CD8-positive, alpha-beta memory T cell (primary cell): ENCODE measurements at regions of chr1 and their contacts with region 1.

Region 1: DNA sequence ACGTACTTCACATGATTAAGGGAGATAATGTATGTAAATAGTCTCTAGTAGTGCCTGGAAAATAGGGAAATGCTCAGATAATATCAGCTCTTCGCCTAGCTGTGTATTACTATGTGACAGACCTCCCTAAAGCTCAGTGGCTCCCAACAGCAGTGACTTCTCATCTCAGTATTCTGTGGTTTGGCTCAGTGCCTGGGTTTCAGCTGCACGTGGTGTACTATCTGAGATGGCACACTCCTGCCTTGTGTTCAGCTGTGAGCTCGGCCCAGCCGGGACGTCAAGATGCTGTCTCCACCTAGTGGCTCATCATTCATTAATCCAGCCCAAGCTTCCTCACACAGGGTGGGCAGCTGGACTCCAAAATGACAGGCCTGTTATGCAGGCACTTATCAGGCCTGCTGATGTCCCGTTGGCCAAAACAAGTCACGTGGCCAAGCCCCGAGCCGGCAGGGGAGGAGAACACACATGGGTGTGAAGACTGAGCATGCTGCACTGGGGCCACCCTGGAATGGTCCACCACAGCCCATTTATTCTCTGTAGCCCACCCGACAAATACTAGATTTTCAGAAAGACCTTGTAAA is 17.8 kb downstream of the SLFNL1 start:
- DNase-seq: peak; percentile 69 to 93 (median 81)
- H3K4me3 ChIP-seq: no peak overlapping the region
- H3K4me3 Mint-ChIP-seq: peak overlapping the region in 1 of 7 donors; percentile 1
- H3K27ac ChIP-seq: no peak overlapping the region
- H3K27ac Mint-ChIP-seq: peak overlapping the region; percentile 2 to 94 (median 55)
- H3K4me1 ChIP-seq: peaks cover 17% of the 10 kb centered on the region
- H3K4me1 Mint-ChIP-seq: peaks cover 13 to 26% (median 18%) of the 10 kb centered on the region in 3 donors
- H3K27me3 ChIP-seq: no peaks in the 10 kb centered on the region
- H3K27me3 Mint-ChIP-seq: no peaks in the 10 kb centered on the region

Region 2: GRCh38 chr1:40476924-40477677 is 526.6 kb before region 1 on chr1 and contains the start of gene ZFP69:
- CTCF ChIA-PET with region 1: no interaction called
- POLR2A ChIA-PET with region 1: no interaction called
- DNase-seq: peak; percentile 55 to 76 (median 72)
- H3K4me3 ChIP-seq: peak within 1 kb of the TSS; percentile 77
- H3K4me3 Mint-ChIP-seq: peak within 1 kb of the TSS; percentile 85 to 96 (median 93)
- H3K27ac ChIP-seq: peak within 1 kb of the TSS; percentile 56
- H3K27ac Mint-ChIP-seq: peak within 1 kb of the TSS; percentile 60 to 88 (median 73)
- H3K4me1 ChIP-seq: peaks cover 10% of the 10 kb centered on the region
- H3K4me1 Mint-ChIP-seq: peaks cover 24 to 34% (median 28%) of the 10 kb centered on the region in 3 donors
- H3K27me3 ChIP-seq: no peaks in the 10 kb centered on the region
- H3K27me3 Mint-ChIP-seq: peaks cover 0 to 1% of the 10 kb centered on the region in 2 donors
- total RNA-seq, gene ZFP69: 2.8 to 2.9 TPM

Region 3: DNA sequence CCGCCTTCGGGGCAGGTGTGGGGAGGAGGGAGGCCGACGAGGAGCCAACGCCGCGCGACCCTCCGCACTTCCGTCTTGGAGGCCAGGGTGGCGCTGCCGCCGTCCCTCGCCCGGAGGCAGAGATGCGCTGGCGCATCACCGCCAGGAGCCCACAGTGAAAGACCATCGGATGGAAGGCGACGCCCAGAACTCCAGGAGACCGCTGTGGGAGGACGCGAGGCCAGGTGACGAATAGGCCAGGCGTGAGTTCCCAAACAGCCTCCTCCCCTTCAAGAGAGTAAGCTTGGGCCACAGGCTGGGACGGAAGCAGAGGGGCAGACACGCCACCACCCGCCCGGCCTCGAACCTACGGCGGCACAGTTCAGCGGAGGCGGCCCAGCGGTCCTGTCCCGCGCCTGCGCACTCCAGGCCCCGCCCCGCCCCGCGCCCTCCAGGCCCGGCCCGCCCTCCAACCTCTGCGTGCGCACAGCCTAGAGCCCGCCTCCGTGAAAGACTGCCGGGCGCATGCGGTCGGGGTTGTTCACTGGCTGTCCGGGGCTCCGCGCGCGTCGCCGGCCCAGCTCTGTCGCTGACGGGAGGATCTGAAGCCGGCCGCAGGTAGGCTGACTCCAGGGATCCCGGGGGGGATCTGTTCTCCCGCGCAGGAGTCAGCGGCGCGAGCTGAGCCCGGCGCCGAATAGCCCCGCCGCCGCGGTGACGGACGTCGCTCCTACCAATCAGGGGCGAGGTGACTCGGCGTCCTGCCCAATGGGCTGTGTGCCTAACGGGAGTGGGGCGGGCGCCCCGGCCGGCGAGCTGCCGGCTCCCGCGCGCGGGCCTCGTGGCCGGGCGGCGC is 24.3 kb before region 1 on chr1 and contains the start of gene CTPS1:
- CTCF ChIA-PET with region 1: interaction called, 41 read pairs
- POLR2A ChIA-PET with region 1: interaction called, 17 read pairs
- DNase-seq: peak; percentile 92 to 96 (median 94)
- H3K4me3 ChIP-seq: peak within 1 kb of the TSS; percentile 69
- H3K4me3 Mint-ChIP-seq: peak within 1 kb of the TSS; percentile 87 to 98 (median 95)
- H3K27ac ChIP-seq: peak within 1 kb of the TSS; percentile 76
- H3K27ac Mint-ChIP-seq: peak within 1 kb of the TSS; percentile 94 to 99 (median 95)
- H3K4me1 ChIP-seq: peaks cover 27% of the 10 kb centered on the region
- H3K4me1 Mint-ChIP-seq: peaks cover 22 to 36% (median 27%) of the 10 kb centered on the region in 3 donors
- H3K27me3 ChIP-seq: no peaks in the 10 kb centered on the region
- H3K27me3 Mint-ChIP-seq: no peaks in the 10 kb centered on the region
- total RNA-seq, gene CTPS1: 151 to 156 TPM

Region 4: DNA sequence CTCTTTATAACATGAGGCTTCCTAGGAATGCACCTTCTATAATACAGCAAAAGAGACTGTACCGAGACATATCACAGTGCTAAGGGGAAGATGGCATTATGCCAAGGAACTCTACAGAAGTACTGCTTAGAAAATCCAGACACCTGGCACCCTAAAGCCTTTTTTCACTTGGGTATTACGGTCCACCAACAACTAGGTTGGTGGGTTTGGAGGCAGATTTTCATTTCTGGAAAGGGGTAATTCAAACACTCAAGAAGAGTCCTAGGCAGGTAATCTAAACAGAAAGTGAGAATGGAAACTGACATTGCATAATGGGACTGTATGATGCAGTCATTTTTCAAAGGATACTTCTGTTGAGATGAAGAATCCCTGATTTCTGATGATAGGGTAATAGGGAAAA is 218.8 kb after region 1 on chr1:
- CTCF ChIA-PET with region 1: no interaction called
- POLR2A ChIA-PET with region 1: no interaction called
- DNase-seq: no peak
- H3K4me3 ChIP-seq: no peak overlapping the region
- H3K4me3 Mint-ChIP-seq: no peak overlapping the region
- H3K27ac ChIP-seq: no peak overlapping the region
- H3K27ac Mint-ChIP-seq: no peak overlapping the region
- H3K4me1 ChIP-seq: no peaks in the 10 kb centered on the region
- H3K4me1 Mint-ChIP-seq: peaks cover 10 to 21% (median 15%) of the 10 kb centered on the region in 3 donors
- H3K27me3 ChIP-seq: no peaks in the 10 kb centered on the region
- H3K27me3 Mint-ChIP-seq: no peaks in the 10 kb centered on the region